ENCODE measurements at regions of chr3 and their contacts with region 1.

Region 1: GRCh38 chr3:32374788-32375595 is 16.7 kb upstream of the CMTM7 start:
- DNase-seq: peak; percentile 70
- H3K4me3 ChIP-seq: no peak overlapping the region
- H3K27ac ChIP-seq: no peak overlapping the region
- H3K4me1 ChIP-seq: no peaks in the 10 kb centered on the region
- H3K27me3 ChIP-seq: peaks cover 33% of the 10 kb centered on the region

Region 2: GRCh38 chr3:31704591-31705179 is 670.3 kb before region 1 on chr3:
- in situ Hi-C with region 1: no loop called
- DNase-seq: peak; percentile 83
- H3K4me3 ChIP-seq: peak overlapping the region; percentile 38; the same call in 1 of the 2 replicates
- H3K27ac ChIP-seq: no peak overlapping the region
- H3K4me1 ChIP-seq: peaks cover 11% of the 10 kb centered on the region
- H3K27me3 ChIP-seq: no peaks in the 10 kb centered on the region

Region 3: GRCh38 chr3:32467333-32468070 is 92.5 kb after region 1 on chr3:
- in situ Hi-C with region 1: loop called (anchors 5 kb)
- DNase-seq: peak; percentile 66
- H3K4me3 ChIP-seq: no peak overlapping the region
- H3K27ac ChIP-seq: no peak overlapping the region
- H3K4me1 ChIP-seq: peaks cover 16% of the 10 kb centered on the region
- H3K27me3 ChIP-seq: no peaks in the 10 kb centered on the region

Region 4: DNA sequence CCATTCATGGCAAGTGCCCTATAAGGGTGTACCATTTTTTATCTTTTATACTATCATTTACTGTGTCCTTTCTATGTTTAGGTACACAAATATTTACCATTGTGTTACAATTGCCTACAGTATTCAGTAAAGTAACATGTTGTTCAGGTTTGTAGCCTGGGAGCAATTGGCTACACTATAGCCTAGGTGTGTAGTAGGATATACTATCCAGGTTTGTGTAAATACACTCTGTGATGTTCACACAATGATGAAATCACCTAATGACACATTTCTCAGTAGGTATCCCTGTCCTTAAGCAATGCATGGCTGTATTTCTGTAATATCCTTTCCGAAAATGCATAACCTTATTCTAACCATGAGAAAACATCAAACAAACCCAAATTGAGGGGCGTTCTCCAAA is 292.1 kb after region 1 on chr3:
- in situ Hi-C with region 1: loop called (anchors 25 kb)
- DNase-seq: no peak
- H3K4me3 ChIP-seq: no peak overlapping the region
- H3K27ac ChIP-seq: no peak overlapping the region
- H3K4me1 ChIP-seq: no peaks in the 10 kb centered on the region
- H3K27me3 ChIP-seq: peaks cover 12% of the 10 kb centered on the region; the same call in 1 of the 2 replicates

Measured in GM23248 (cell line).